ENCODE measurements at regions of chr2 and their contacts with region 1.

Region 1: DNA sequence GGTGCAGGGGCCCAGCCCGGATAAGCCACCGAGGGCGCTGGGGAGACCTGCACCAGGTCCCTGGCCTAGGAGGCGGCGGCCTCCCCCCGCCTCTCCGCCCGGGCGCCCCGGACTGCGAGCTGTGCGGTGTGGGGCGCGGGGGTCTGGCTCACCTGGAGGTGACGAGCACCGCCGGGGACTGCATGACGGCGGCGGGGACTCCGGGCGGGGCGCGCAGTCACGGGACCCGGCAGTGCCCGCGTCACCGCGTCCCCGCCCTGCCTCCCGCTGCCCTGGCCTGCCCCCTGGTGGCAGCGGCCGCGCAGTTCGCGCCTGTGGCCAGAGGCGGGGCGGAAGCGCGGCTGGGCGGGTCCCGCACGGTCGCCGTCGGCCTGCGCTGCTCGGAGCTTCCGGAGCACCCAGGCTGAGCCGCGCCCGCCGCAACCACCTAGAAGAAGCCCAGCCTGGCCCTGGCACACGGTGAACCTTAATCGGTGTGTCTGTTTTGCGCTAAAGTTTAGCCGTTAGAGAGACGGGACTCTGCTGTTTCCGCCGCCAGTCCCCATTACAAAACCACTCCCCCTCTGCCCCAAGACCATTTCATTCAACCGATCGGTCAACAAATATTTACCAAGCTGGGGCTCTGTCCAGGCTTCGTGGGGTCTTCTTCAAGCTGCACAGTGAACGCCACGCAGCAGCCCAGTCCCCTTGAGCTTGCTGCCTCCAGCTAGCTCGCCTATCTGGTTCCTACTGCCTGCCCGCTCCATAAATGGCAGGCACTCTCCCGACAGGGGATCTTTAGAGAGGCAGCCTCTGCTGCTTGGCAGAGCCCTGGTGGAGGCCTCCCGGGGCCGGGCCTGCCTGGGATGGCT is at the start of gene HS1BP3:
- DNase-seq: peak; percentile 83
- H3K4me3 Mint-ChIP-seq: peak within 1 kb of the TSS; percentile 77
- H3K27ac Mint-ChIP-seq: peak within 1 kb of the TSS; percentile 77
- H3K4me1 Mint-ChIP-seq: peaks cover 20% of the 10 kb centered on the region
- H3K27me3 Mint-ChIP-seq: no peaks in the 10 kb centered on the region
- total RNA-seq, gene HS1BP3: 6.0 to 6.1 TPM

Region 2: DNA sequence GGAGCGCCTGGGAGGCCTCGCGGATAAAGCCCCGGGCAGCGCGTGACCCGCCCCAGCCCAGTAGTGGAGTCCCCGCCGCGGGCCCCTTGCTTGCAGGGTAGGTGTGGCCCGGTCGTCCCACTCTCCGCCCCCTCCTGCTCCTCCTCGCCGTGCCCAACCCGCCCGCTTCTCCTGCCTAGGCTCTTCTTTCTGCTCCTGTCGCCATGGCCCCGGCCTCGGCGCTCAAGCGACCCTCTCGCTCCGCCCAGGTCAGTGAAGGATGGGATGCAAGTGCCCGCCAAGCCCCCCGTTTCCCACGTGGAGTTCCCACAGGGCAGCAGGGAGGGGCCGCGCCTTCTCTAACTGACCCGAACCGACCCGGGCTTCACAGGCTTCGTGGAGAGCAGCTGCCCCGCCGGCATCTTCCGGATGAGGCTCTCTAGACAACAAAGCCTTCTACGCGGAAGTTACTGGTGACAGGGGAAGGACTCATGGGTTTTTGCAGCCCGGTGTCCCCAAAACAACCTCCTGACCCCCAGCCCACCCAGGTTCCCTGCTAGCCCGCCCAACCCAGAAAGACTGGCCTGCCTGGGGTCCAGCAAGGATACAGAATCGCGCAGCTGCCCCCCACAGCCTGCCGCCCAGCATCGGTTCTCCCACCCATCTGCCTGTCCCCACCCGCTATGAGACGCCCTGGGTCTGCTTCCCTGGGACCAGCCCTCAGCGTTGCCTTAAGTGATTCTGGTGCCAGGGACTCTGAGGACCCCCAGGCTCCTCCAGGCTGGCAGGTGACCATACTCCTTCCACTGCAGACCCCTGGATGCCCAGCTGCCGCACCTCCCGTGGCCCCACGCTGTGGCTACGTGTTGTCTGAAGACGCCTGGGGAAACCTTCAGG is 782.2 kb before region 1 on chr2:
- CTCF ChIA-PET with region 1: no interaction called
- intact Hi-C with region 1: loop called (anchors 1 kb)
- DNase-seq: peak; percentile 67
- H3K4me3 Mint-ChIP-seq: peak overlapping the region; percentile 83
- H3K27ac Mint-ChIP-seq: peak overlapping the region; percentile 47
- H3K4me1 Mint-ChIP-seq: peaks cover 22% of the 10 kb centered on the region
- H3K27me3 Mint-ChIP-seq: no peaks in the 10 kb centered on the region

Region 3: GRCh38 chr2:20051532-20052228 is 599.4 kb before region 1 on chr2 and contains the start of gene LAPTM4A:
- CTCF ChIA-PET with region 1: no interaction called
- intact Hi-C with region 1: loop called (anchors 1 kb)
- DNase-seq: peak; percentile 98
- H3K4me3 Mint-ChIP-seq: no peak within 1 kb of the TSS
- H3K27ac Mint-ChIP-seq: no peak within 1 kb of the TSS
- H3K4me1 Mint-ChIP-seq: peaks cover 25% of the 10 kb centered on the region
- H3K27me3 Mint-ChIP-seq: peaks cover 8% of the 10 kb centered on the region
- total RNA-seq, gene LAPTM4A: 23.4 to 24.4 TPM

Region 4: GRCh38 chr2:20411361-20411894 is 239.7 kb before region 1 on chr2:
- CTCF ChIA-PET with region 1: interaction called, 7 read pairs
- intact Hi-C with region 1: loop called (anchors 1 kb)
- DNase-seq: peak; percentile 84
- H3K4me3 Mint-ChIP-seq: no peak overlapping the region
- H3K27ac Mint-ChIP-seq: no peak overlapping the region
- H3K4me1 Mint-ChIP-seq: no peaks in the 10 kb centered on the region
- H3K27me3 Mint-ChIP-seq: peaks cover 2% of the 10 kb centered on the region

Region 5: GRCh38 chr2:20438334-20439192 is 212.5 kb before region 1 on chr2:
- CTCF ChIA-PET with region 1: interaction called, 21 read pairs
- intact Hi-C with region 1: no loop called
- DNase-seq: no peak
- H3K4me3 Mint-ChIP-seq: no peak overlapping the region
- H3K27ac Mint-ChIP-seq: no peak overlapping the region
- H3K4me1 Mint-ChIP-seq: no peaks in the 10 kb centered on the region
- H3K27me3 Mint-ChIP-seq: peaks cover 2% of the 10 kb centered on the region

Region 6: GRCh38 chr2:20661067-20661980 is 10.2 kb after region 1 on chr2:
- CTCF ChIA-PET with region 1: interaction called, 72 read pairs
- intact Hi-C with region 1: no loop called
- DNase-seq: peak; percentile 77
- H3K4me3 Mint-ChIP-seq: no peak overlapping the region
- H3K27ac Mint-ChIP-seq: no peak overlapping the region
- H3K4me1 Mint-ChIP-seq: peaks cover 7% of the 10 kb centered on the region
- H3K27me3 Mint-ChIP-seq: peaks cover 44% of the 10 kb centered on the region

Region 7: DNA sequence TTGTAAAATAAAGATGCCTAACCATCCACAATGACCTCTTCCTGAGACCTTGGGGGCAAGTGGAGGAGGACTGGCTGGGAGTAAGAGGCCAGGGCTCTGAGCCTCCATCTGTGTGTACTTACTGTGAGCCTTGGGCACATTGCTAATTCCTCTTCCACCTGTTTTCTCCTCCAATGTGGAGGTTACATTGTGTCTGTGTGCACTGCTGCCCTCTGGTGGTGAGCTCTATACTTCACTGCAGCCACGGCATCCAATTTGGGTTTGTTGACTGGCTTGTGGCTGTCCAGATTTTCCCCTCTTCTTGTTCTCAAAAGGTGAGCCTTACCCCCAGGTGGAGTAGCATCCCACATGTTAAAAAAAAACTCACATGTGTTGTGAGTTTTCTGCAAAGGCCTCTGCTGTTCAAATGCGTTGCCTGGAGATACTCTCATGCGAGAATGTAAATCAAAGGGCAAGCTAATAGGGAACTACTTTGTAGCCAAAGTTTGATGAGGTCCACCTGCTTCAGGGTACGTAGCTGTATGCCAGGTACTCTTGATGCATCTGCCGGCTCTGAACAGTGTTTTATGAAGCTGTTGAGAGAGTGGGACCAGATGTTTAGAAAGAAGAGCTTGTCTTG is 311.9 kb after region 1 on chr2:
- CTCF ChIA-PET with region 1: interaction called, 12 read pairs
- intact Hi-C with region 1: no loop called
- DNase-seq: peak; percentile 81
- H3K4me3 Mint-ChIP-seq: no peak overlapping the region
- H3K27ac Mint-ChIP-seq: no peak overlapping the region
- H3K4me1 Mint-ChIP-seq: no peaks in the 10 kb centered on the region
- H3K27me3 Mint-ChIP-seq: peaks cover 9% of the 10 kb centered on the region